ENCODE measurements at regions of chr14 and their contacts with region 1.

Region 1: DNA sequence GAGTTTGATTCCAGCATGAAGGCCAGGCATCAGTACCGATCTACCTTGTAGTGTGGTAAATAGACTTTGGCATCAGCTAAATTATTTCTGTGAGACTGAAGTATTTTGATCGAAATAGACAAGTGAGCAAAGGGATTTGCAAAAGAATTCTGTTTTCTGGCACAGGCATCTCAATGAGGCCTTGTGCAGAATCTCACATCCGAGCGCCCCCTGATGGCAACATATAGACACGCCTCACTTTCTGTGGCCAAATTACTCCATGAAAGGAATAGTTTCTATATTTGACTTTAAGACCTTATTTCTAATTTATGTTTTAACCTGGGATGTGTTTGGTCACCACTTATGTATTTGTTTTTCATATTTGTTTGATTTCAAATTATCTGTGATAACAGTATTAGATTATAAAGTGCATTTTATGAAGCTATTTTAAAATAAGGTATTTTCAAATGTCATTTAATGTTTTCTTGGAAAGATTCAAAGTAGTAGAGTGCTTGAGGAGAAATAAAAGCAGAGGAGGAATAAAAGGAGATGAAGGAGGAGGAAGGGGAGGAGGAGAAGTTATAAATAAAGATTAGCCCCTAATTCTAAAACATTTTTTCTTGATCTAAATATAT is 731.9 kb downstream of the NRXN3 start:
- DNase-seq: peak; percentile 7
- H3K4me3 ChIP-seq: peak overlapping the region in 1 of 2 experiments; percentile 31; a peak in 1 of 4 replicates
- H3K27ac ChIP-seq: no peak overlapping the region
- H3K4me1 ChIP-seq: no peaks in the 10 kb centered on the region
- H3K27me3 ChIP-seq: no peaks in the 10 kb centered on the region; the same call in 1 of the 2 replicates
- CTCF ChIP-seq: peak; percentile 83
- EP300 ChIP-seq: no peak
- RAD21 ChIP-seq: peak; percentile 49

Region 2: DNA sequence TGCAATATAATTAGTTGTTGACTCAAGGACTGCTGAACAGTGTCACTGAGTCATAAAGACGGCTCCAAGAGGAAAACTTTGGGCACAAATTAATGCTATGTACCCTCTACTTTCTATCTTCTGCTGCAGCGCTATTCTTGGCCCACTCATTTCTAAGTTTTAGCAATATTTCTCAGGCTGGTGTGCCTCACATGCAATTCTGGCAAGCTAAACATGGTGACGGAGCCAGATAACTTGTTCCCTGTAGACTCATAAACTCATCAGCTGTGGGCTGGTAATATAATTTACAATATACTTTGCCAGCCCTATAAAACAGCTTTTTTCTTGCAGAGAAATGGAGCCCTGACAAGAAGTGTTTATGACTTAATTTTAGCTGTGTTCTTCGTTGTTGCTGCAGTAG is 116.9 kb before region 1 on chr14:
- CTCF ChIA-PET with region 1: no interaction called
- POLR2A ChIA-PET with region 1: no interaction called
- DNase-seq: no peak
- H3K4me3 ChIP-seq: no peak overlapping the region
- H3K27ac ChIP-seq: no peak overlapping the region
- H3K4me1 ChIP-seq: no peaks in the 10 kb centered on the region
- H3K27me3 ChIP-seq: no peaks in the 10 kb centered on the region
- CTCF ChIP-seq: no peak
- EP300 ChIP-seq: no peak
- RAD21 ChIP-seq: no peak

Region 3: DNA sequence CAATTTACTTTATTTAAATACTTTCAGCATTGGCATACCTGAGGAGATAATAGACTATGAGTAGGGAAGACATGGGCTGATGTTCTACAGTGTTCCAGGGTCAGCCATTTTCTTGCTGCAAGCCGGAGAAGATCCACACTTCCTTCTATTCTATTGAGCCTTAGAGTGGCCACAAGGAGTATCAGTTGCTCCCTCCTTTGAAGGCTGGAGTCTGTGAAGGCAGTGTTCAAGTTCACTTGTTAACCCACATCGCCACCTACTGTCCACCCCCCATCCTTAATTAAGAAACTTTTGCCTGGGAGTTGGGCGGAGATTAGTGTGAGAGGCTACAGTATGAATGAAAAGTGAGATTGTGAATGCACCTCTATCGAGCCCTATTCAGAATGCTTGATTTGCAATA is 65.3 kb before region 1 on chr14:
- CTCF ChIA-PET with region 1: interaction called, 13 read pairs
- POLR2A ChIA-PET with region 1: no interaction called
- DNase-seq: peak; percentile 21
- H3K4me3 ChIP-seq: no peak overlapping the region; a peak in 1 of 4 replicates
- H3K27ac ChIP-seq: no peak overlapping the region
- H3K4me1 ChIP-seq: peaks cover 0 to 3% of the 10 kb centered on the region in 2 experiments; a peak in 2 of 4 replicates
- H3K27me3 ChIP-seq: no peaks in the 10 kb centered on the region; the same call in 1 of the 2 replicates
- CTCF ChIP-seq: peak; percentile 57
- EP300 ChIP-seq: no peak
- RAD21 ChIP-seq: peak; percentile 71

Region 4: DNA sequence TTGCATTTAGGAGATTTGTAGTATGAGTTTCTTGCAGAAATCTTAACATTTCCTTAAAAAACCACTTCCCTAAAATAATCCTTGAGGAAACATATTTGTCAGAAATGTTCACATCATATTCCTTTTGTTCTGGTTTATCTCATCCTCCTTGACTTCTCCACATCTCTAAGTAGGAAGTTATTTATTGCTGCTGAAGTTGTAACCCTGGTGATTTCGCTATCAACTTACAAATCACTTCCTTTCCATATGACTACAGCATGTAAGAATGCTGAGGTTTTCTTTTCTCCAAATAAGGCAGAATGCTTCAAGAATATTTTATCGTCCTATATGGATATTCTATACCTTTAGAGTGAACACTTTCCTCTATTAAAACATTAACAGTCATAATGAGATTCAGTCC is 19.7 kb after region 1 on chr14:
- CTCF ChIA-PET with region 1: interaction called, 12 read pairs
- POLR2A ChIA-PET with region 1: no interaction called
- DNase-seq: no peak
- H3K4me3 ChIP-seq: no peak overlapping the region
- H3K27ac ChIP-seq: peak overlapping the region; percentile 64 to 91; a peak in 3 of 4 replicates
- H3K4me1 ChIP-seq: no peaks in the 10 kb centered on the region; a peak in 1 of 4 replicates
- H3K27me3 ChIP-seq: no peaks in the 10 kb centered on the region
- CTCF ChIP-seq: no peak
- EP300 ChIP-seq: peak; percentile 42 to 95; a peak in 2 of 4 replicates
- RAD21 ChIP-seq: no peak

Region 5: GRCh38 chr14:78933948-78934524 is 31.9 kb after region 1 on chr14:
- CTCF ChIA-PET with region 1: interaction called, 12 read pairs
- POLR2A ChIA-PET with region 1: no interaction called
- DNase-seq: peak; percentile 43
- H3K4me3 ChIP-seq: no peak overlapping the region
- H3K27ac ChIP-seq: no peak overlapping the region
- H3K4me1 ChIP-seq: no peaks in the 10 kb centered on the region
- H3K27me3 ChIP-seq: no peaks in the 10 kb centered on the region
- CTCF ChIP-seq: peak; percentile 77
- EP300 ChIP-seq: no peak
- RAD21 ChIP-seq: peak; percentile 78

Region 6: DNA sequence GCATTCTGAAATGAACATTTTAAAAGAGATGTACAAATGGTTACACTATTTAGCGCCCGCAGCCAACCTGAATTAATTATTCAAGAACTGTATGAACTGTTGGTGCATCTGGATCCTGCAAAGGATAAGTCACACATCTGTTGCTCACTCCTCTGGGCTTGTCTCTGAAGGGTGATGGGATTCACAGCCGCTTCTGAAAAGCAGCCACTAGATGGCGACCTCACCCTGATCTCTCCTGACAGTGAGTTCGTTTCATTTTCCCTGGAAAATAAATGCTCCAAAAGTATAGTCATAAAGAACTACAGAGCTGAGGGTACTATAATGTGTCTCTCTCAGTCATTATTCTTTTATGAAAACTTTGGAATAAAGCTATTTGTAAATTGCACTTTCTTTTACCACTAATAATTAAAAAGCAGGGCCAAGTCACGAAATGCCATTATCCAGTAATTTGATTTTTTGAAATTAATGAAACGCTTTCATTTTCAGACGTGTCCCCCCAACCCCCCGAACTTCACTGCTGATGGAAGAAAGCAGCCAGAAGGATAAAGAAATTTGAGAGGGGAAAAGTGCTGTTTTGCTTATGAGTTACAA is 57.7 kb after region 1 on chr14:
- CTCF ChIA-PET with region 1: interaction called, 13 read pairs
- POLR2A ChIA-PET with region 1: no interaction called
- DNase-seq: peak; percentile 65
- H3K4me3 ChIP-seq: peak overlapping the region; percentile 24 to 43; a peak in 3 of 4 replicates
- H3K27ac ChIP-seq: peak overlapping the region in 1 of 2 experiments; percentile 18; a peak in 2 of 4 replicates
- H3K4me1 ChIP-seq: no peaks in the 10 kb centered on the region; a peak in 1 of 4 replicates
- H3K27me3 ChIP-seq: no peaks in the 10 kb centered on the region
- CTCF ChIP-seq: peak; percentile 95
- EP300 ChIP-seq: no peak
- RAD21 ChIP-seq: peak; percentile 80